ENCODE measurements at regions of chr1 and their contacts with region 1.

Region 1: GRCh38 chr1:48498096-48498791 is 26.2 kb upstream of the SPATA6 start:
- DNase-seq: peak; percentile 73
- H3K4me3 ChIP-seq: no peak overlapping the region
- H3K27ac ChIP-seq: no peak overlapping the region
- H3K4me1 ChIP-seq: peaks cover 7% of the 10 kb centered on the region
- H3K27me3 ChIP-seq: no peaks in the 10 kb centered on the region
- CTCF ChIP-seq: peak; percentile 93 to 96
- POLR2A ChIP-seq: no peak

Region 2: GRCh38 chr1:48109390-48110013 is 388.7 kb before region 1 on chr1:
- CTCF ChIA-PET with region 1: interaction called, 29 read pairs
- POLR2A ChIA-PET with region 1: no interaction called
- dilution Hi-C with region 1: no loop called
- intact Hi-C with region 1: loop called (anchors 1 kb)
- DNase-seq: peak; percentile 55
- H3K4me3 ChIP-seq: no peak overlapping the region
- H3K27ac ChIP-seq: no peak overlapping the region
- H3K4me1 ChIP-seq: no peaks in the 10 kb centered on the region
- H3K27me3 ChIP-seq: no peaks in the 10 kb centered on the region
- CTCF ChIP-seq: peak; percentile 64 to 78
- POLR2A ChIP-seq: no peak

Region 3: GRCh38 chr1:48227165-48228013 is 270.9 kb before region 1 on chr1:
- CTCF ChIA-PET with region 1: no interaction called
- POLR2A ChIA-PET with region 1: no interaction called
- dilution Hi-C with region 1: no loop called
- intact Hi-C with region 1: loop called (anchors 5 kb)
- DNase-seq: no peak
- H3K4me3 ChIP-seq: no peak overlapping the region
- H3K27ac ChIP-seq: no peak overlapping the region
- H3K4me1 ChIP-seq: peaks cover 9% of the 10 kb centered on the region
- H3K27me3 ChIP-seq: no peaks in the 10 kb centered on the region
- CTCF ChIP-seq: no peak
- POLR2A ChIP-seq: no peak

Region 4: GRCh38 chr1:48396208-48396607 is 102.0 kb before region 1 on chr1:
- CTCF ChIA-PET with region 1: interaction called, 10 read pairs
- POLR2A ChIA-PET with region 1: no interaction called
- dilution Hi-C with region 1: no loop called
- intact Hi-C with region 1: no loop called
- DNase-seq: no peak
- H3K4me3 ChIP-seq: no peak overlapping the region
- H3K27ac ChIP-seq: no peak overlapping the region
- H3K4me1 ChIP-seq: no peaks in the 10 kb centered on the region
- H3K27me3 ChIP-seq: no peaks in the 10 kb centered on the region
- CTCF ChIP-seq: no peak
- POLR2A ChIP-seq: no peak

Region 5: DNA sequence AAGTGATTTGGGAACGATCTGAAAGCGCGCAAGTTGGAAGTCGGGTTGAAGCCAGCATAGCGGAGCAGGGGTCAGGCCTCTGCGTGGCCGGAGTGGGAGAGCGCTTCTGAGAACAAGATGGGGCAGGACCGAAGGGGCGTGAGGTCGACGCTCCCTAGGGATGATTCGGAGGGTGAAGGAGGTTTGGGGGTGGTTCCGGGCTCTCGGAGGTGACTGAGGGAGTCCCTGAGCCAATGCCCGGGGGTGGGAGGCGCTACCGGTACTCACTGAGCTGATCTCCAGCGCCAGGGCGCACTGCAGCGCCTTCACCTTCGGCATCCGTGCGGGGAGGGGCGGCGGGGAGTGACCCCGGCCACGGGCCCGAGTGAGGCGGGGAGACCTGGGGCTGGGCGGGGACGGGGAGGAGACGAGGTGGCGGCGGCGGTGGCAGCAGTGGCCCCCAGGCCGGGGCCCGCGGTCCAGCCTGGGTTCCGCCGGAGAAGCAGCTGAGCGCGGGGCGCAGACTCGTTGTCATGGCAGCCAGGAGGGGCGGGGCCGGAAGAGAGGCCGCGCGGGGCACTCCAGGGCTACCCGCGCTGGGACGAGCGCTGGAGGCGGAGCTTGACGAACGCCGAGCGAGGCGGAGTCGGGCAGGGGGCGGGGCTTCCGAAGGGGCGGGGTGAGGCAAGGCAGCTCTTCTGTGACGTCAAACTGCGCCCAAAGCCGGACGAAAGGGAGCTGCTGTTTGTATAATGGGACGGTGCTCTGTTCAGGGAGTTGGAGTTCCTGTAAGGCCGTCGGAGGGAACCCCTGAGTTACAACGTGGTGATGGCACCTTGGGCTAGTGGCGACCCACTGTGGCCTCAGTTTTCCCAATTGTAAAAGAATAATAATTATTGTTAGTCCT is 26.3 kb before region 1 on chr1 and contains the start of gene SPATA6:
- CTCF ChIA-PET with region 1: interaction called, 49 read pairs
- POLR2A ChIA-PET with region 1: no interaction called
- dilution Hi-C with region 1: no loop called
- intact Hi-C with region 1: loop called (anchors 1 kb)
- DNase-seq: peak; percentile 89
- H3K4me3 ChIP-seq: peak within 1 kb of the TSS; percentile 52 to 81 (median 78)
- H3K27ac ChIP-seq: peak within 1 kb of the TSS; percentile 44
- H3K4me1 ChIP-seq: peaks cover 29% of the 10 kb centered on the region
- H3K27me3 ChIP-seq: peaks cover 0 to 1% of the 10 kb centered on the region in 2 experiments
- CTCF ChIP-seq: no peak
- POLR2A ChIP-seq: peak; percentile 66
- total RNA-seq, gene SPATA6: 4.9 and 10.5 TPM in 2 replicates

Region 6: GRCh38 chr1:50348449-50349241 is 1850.4 kb after region 1 on chr1:
- CTCF ChIA-PET with region 1: interaction called, 11 read pairs
- POLR2A ChIA-PET with region 1: no interaction called
- dilution Hi-C with region 1: no loop called
- intact Hi-C with region 1: no loop called
- DNase-seq: peak; percentile 63
- H3K4me3 ChIP-seq: no peak overlapping the region
- H3K27ac ChIP-seq: no peak overlapping the region
- H3K4me1 ChIP-seq: peaks cover 3% of the 10 kb centered on the region
- H3K27me3 ChIP-seq: no peaks in the 10 kb centered on the region
- CTCF ChIP-seq: peak; percentile 79 to 82
- POLR2A ChIP-seq: no peak